GM10248 (cell line): ENCODE measurements at regions of chr10 and their contacts with region 1.

Region 1: DNA sequence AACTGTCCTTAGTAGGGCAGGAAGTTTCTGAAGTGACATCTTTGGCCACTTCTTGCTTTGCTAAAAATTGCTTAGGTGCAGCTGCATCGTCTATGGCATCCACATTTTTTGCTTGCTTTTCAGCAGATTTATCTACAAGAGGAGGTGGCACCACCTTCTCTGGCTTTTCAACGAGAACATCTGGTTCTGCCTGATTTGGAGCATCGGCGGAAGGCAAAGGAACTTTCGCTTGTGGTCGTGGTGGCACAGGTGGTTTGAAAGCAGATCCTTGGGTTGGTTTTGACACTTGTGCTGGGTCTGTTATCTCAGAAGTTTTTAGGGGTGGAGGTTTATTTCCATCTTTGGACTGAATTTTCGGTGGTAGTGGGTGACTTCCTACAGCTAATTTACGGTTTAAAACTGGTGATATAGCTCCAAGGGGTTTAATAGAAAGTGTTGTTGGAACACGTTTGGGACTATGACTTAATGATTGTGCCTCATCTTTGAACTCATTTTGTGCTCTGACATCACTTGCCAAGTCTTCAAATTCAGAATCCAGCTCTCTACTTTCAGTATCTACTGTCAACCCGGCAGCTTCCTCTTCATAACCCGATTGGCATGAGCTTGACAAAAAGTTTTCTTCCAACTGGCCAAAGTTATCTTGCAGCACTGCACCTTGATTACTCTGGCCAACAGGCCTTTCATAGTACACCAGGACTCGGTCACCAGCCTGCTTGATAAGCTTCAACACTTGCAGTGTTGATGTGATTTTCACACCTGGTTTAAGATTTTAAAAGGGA is 44.0 kb downstream of the SLC18A2 start:
- DNase-seq: no peak
- CTCF ChIP-seq: no peak

Region 2: DNA sequence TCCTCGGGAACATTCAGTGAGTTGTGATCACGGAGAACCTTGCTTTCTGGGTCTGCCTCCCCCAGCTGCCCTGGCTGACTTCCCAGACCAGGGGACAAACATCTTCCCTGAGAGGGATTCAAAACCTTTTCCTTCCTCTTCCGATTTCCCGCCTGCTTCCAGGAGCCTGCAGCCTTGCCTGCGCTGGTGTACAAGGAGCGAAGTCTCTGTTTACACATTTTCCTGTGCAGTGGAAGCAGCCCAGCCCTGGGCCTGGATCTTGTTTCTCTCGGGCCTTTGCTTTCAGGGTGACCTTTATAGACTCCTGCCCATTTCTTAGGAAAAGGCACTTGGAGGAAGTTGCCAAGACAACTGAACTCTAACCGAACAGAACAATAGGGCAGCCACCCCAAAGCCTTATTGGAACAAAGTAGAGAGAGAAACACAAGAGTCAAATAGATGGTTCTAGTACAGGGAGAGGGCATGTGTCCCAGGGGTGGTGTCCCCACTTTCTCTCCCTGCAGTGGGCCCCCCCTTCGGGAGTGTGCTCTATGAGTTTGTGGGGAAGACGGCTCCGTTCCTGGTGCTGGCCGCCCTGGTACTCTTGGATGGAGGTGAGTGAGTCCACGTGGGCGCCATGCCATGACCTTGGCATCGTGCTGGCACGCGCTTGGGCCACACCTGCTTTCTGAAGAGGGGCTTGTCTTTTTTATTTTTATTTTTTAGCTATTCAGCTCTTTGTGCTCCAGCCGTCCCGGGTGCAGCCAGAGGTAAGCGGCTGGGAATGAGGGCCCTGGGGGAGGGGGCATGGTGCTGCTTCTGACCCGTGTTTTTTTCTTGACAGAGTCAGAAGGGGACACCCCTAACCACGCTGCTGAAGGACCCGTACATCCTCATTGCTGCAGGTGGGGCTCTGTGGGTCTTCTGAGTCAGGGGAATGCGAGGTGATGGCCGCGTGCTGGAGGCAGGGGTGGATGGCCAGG is 29.9 kb before region 1 on chr10:
- CTCF ChIA-PET with region 1: no interaction called
- POLR2A ChIA-PET with region 1: no interaction called
- DNase-seq: no peak
- CTCF ChIP-seq: no peak

Region 3: GRCh38 chr10:117274509-117274908 is 10.4 kb before region 1 on chr10:
- CTCF ChIA-PET with region 1: interaction called, 14 read pairs
- POLR2A ChIA-PET with region 1: no interaction called
- DNase-seq: no peak
- CTCF ChIP-seq: no peak

Region 4: GRCh38 chr10:117382861-117383260 is 98.0 kb after region 1 on chr10:
- CTCF ChIA-PET with region 1: no interaction called
- POLR2A ChIA-PET with region 1: no interaction called
- DNase-seq: no peak
- CTCF ChIP-seq: no peak